Dendritic cell treated with granulocyte-macrophage colony-stimulating factor and Interleukin-4, amounts not matched to agents 40 ng/mL and 50 ng/mL, for 4 days (primary cell): ENCODE measurements at regions of chr17 and their contacts with region 1.

Region 1: DNA sequence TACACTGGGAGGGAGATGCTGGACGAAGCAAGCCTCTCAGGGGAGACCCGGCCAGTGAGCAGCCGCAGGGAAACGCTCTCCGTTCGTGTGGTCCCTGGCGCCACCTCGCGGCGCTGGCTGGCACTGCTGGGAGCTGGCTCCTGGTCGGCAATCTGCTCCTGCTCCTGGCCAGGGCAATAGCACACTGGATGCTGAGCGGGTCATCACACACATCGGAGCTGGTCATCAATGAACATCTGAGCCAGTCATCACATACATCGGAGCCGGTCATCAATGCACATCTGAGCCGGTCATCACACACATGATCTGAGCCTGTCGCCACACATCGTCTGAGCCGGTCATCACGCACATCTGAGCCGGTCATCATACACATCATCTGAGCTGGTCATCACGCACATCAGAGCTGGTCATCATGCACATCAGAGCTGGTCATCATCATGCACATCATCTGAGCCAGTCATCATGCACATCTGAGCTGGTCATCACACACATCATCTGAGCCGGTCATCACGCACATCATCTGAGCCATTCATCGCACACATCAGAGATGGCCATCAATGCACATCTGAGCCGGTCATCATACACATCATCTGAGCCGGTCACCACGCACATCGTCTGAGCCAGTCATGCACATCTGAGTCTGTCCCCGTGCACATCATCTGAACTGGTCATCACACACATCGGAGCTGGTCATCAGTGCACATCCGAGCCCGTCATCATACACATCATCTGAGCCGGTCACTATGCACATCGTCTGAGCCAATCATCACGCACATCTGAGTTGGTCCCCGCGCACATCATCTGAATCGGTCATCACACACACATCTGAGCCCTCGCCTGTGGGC is 217.3 kb downstream of the RBFOX3 start:
- H3K4me3 Mint-ChIP-seq: no peak overlapping the region
- H3K27ac Mint-ChIP-seq: no peak overlapping the region
- H3K4me1 Mint-ChIP-seq: no peaks in the 10 kb centered on the region
- H3K27me3 Mint-ChIP-seq: peaks cover 61% of the 10 kb centered on the region

Region 2: DNA sequence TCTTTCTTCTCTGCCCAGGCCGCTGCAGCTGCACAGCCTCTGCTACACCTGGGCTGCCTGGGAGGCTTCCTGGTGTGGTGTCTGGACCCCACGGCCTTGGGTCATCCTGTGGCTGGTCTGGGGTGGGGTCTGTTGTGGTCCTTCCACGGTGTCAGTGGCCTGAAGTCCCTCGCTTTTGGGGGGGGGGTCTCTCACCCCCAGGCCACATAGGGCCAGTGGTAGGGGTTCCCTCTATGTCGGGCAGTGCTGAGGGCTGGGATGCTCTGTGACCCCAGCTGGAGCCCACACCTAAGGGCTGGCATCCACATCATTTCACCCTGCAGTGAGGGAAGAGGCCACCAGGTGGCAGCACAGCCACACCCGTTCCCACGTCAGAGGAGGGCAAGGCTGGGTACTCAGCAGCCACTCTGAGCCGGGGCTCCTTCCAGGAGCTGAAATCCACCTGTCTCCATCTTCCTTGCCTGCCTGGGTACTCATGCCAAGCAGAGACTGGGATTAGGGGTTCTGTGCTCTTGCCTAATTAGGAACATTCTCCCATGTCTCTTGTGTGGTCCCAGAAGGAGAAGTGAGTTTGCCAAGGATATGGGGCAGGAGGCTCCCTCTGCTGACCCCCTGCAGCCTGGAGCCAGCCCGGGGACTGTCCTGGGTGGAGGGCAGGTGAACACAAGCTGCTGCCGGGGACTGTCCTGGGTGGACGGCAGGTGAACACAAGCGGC is 306.0 kb before region 1 on chr17:
- intact Hi-C with region 1: loop called (anchors 1 kb)
- H3K4me3 Mint-ChIP-seq: no peak overlapping the region
- H3K27ac Mint-ChIP-seq: no peak overlapping the region
- H3K4me1 Mint-ChIP-seq: no peaks in the 10 kb centered on the region
- H3K27me3 Mint-ChIP-seq: peaks cover 11% of the 10 kb centered on the region